ENCODE measurements at regions of chrX and their contacts with region 1.

Region 1: GRCh38 chrX:22063284-22063683 is 31.2 kb downstream of the PHEX start:
- DNase-seq: peak; percentile 0
- H3K4me3 Mint-ChIP-seq: no peak overlapping the region
- H3K27ac Mint-ChIP-seq: peak overlapping the region; percentile 59
- H3K4me1 Mint-ChIP-seq: peaks cover 47% of the 10 kb centered on the region
- H3K27me3 Mint-ChIP-seq: no peaks in the 10 kb centered on the region

Region 2: DNA sequence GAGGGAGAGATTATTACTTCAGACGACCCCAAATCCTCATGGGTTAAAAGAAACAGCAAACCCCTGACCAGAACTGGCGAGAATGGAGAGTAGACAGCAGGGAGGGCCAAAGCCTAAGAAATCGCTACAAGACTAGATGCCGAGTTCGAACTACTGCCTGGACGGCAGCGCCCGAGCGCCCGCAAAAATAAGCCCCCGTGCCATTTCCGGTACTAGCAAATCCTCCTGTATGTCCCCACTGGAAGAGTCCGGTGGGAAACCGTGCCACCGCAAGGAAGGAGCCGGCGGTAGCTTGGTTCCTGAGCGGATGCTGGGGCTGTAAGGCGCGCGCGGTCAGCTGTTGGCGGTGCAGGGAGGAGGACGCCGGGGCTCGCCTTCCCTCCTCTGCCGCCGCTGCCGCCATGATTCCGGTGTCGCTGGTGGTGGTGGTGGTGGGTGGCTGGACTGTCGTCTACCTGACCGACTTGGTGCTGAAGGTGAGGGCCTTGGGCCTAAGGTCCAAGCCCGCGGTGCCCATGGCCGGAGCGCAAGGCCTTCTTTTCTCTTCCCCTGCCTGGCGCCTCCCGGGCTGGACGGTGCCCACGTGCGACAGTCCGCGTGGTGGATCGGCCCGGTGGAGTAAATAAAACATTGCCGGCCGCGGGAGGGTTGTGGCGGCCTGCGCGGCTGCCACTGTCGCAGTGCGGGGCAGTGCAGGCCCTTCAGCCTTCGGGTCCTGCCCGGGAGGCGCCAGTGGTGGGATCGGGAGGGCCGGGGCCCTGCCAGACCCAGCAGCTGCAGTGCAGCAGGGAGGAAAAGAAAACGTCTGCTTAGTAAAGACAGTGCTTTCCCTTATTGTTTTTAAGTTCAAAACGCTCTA is 223.7 kb before region 1 on chrX and contains the start of gene MBTPS2:
- intact Hi-C with region 1: loop called (anchors 2 kb)
- DNase-seq: peak; percentile 73
- H3K4me3 Mint-ChIP-seq: peak within 1 kb of the TSS; percentile 88
- H3K27ac Mint-ChIP-seq: peak within 1 kb of the TSS; percentile 90
- H3K4me1 Mint-ChIP-seq: peaks cover 14% of the 10 kb centered on the region
- H3K27me3 Mint-ChIP-seq: no peaks in the 10 kb centered on the region
- total RNA-seq, gene MBTPS2: 10.5 and 11.3 TPM in 2 replicates

Region 3: DNA sequence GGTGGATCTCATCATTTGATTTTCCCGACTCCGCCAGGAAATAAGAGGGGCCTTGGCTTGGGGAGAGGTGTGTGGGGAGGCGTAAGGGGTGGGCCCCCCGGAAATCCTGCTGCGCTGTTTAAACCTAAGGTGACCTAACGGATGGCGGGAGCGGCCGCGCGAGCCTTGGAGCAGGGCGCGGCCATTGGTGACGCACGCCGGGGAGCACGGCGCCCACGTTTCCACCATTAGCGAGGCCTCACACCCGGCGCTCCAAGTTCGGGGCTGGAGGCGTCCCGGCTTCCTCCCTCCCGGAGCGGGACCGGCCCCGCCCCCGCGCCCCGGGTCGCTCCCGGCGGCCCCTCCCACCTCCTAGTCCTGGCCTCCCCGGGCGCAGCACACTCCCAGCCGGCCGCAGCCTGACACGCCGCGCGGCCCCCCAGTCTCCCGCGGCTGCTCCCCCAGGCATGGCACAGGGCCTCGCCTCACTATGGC is 122.9 kb before region 1 on chrX and contains the start of gene SMS:
- intact Hi-C with region 1: loop called (anchors 5 kb)
- DNase-seq: peak; percentile 23
- H3K4me3 Mint-ChIP-seq: peak within 1 kb of the TSS; percentile 90
- H3K27ac Mint-ChIP-seq: peak within 1 kb of the TSS; percentile 92
- H3K4me1 Mint-ChIP-seq: peaks cover 35% of the 10 kb centered on the region
- H3K27me3 Mint-ChIP-seq: no peaks in the 10 kb centered on the region
- total RNA-seq, gene SMS: 144 and 145 TPM in 2 replicates

Region 4: GRCh38 chrX:22021751-22022324 is 41.4 kb before region 1 on chrX:
- intact Hi-C with region 1: no loop called
- DNase-seq: no peak
- H3K4me3 Mint-ChIP-seq: no peak overlapping the region
- H3K27ac Mint-ChIP-seq: no peak overlapping the region
- H3K4me1 Mint-ChIP-seq: peaks cover 1% of the 10 kb centered on the region
- H3K27me3 Mint-ChIP-seq: no peaks in the 10 kb centered on the region

Region 5: GRCh38 chrX:22032084-22032483 is 31.2 kb before region 1 on chrX and contains the start of gene PHEX:
- intact Hi-C with region 1: loop called (anchors 1 kb)
- DNase-seq: no peak
- H3K4me3 Mint-ChIP-seq: no peak within 1 kb of the TSS
- H3K27ac Mint-ChIP-seq: peak within 1 kb of the TSS; percentile 63
- H3K4me1 Mint-ChIP-seq: peaks cover 21% of the 10 kb centered on the region
- H3K27me3 Mint-ChIP-seq: no peaks in the 10 kb centered on the region
- total RNA-seq, gene PHEX: 12.8 and 14.3 TPM in 2 replicates

Region 6: DNA sequence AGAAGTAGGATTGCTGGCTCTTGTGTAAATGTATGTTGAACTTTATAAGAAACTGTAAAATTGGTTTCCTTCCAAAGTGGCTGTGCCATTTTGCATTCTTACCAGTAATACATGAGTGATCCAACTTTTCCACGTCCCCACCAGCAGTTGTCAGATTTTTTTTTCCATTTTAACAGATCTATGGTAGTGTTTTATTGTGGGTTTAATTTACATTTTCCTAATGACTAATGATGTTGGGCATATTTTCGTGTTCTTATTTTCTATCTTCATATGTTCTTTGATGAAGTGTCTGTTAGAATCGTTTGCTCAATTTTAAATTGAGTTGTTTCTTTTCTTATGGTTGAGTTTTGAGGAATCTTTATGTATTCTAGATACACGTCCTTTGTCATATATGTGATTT is 25.0 kb after region 1 on chrX:
- intact Hi-C with region 1: loop called (anchors 1 kb)
- DNase-seq: no peak
- H3K4me3 Mint-ChIP-seq: no peak overlapping the region
- H3K27ac Mint-ChIP-seq: peak overlapping the region; percentile 76
- H3K4me1 Mint-ChIP-seq: peaks cover 18% of the 10 kb centered on the region
- H3K27me3 Mint-ChIP-seq: no peaks in the 10 kb centered on the region

Region 7: GRCh38 chrX:22345884-22346283 is 282.6 kb after region 1 on chrX:
- intact Hi-C with region 1: no loop called
- DNase-seq: no peak
- H3K4me3 Mint-ChIP-seq: no peak overlapping the region
- H3K27ac Mint-ChIP-seq: no peak overlapping the region
- H3K4me1 Mint-ChIP-seq: no peaks in the 10 kb centered on the region
- H3K27me3 Mint-ChIP-seq: no peaks in the 10 kb centered on the region

Region 8: DNA sequence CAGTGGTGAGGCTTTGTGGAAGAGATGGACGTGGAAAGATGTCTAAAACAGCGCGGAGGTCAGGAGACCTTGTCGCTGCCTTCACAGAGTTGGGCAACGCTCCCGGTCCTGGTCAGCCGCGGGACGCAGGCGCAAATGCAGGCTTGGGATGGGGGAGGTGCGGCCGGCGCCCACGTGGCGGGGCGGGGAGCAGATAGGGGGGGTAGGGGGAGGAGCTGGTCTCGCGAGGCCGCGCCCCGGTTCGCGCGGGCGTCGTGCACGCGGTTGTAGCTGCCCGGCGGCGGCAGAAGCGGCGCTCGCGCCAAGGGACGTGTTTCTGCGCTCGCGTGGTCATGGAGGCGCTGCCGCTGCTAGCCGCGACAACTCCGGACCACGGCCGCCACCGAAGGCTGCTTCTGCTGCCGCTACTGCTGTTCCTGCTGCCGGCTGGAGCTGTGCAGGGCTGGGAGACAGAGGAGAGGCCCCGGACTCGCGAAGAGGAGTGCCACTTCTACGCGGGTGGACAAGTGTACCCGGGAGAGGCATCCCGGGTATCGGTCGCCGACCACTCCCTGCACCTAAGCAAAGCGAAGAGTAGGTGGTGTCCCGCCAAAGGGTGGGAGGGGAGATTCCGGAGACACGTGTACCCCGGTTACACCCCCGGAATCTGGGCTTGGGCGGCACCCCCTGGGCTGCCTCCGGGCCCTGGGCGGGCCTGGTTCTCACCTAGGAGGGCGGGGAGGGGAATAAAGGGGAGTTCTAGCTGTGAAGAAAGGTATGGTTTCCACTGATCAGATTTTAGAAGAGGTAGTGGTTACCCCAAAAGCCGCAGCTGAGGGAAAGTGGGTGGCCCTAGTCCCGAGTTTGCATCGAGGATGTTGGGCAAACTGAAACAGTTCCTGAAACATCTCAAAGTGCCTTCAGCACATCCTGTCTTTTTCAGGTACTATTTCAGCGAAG is 1604.2 kb after region 1 on chrX and contains the start of gene PRDX4:
- intact Hi-C with region 1: loop called (anchors 10 kb)
- DNase-seq: peak; percentile 66
- H3K4me3 Mint-ChIP-seq: peak within 1 kb of the TSS; percentile 88
- H3K27ac Mint-ChIP-seq: peak within 1 kb of the TSS; percentile 94
- H3K4me1 Mint-ChIP-seq: peaks cover 37% of the 10 kb centered on the region
- H3K27me3 Mint-ChIP-seq: no peaks in the 10 kb centered on the region
- total RNA-seq, gene PRDX4: 75.5 and 83.2 TPM in 2 replicates